Tibial artery (tissue), 4 donors: ENCODE measurements at regions of chr4 and their contacts with region 1.

Region 1: DNA sequence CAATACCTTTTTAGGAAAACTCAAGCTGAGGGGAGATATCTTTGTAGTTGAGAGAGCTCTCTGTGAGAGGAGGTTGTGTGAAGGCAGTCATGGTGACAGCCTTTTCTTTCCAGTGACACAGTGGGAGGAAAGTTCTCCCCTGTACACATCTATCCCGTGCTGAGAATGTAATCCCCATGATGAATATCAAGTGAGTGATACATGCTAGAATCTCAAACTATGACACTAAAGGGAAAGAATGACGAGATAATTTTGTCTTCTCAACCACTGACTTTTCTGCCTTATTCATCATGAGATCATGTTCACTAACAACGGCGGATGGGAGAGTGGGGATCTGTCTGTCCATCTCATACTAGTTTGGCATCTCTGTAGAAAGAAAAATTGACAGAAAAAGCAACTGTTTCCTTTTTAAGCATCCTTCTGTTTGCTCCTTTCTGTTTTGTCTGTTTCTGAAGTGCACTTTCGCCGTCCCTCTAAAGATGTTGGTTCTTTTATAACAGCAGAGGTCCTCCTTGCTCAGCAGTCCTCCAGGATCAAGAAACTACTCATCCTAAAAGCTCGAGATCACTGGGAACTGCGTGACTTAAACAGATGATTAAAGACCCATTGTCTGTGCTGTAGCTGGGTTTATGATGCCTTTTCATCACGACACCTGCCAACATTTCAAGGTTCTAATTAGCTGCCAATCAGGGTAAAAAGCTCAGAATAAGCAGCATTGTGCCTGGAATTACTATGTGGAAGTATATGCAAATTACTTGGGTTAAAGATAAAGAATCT is 137.6 kb downstream of the DCK start:
- DNase-seq: no peak
- H3K4me3 ChIP-seq: no peak overlapping the region
- H3K27ac ChIP-seq: no peak overlapping the region
- H3K4me1 ChIP-seq: no peaks in the 10 kb centered on the region
- H3K27me3 ChIP-seq: no peaks in the 10 kb centered on the region
- CTCF ChIP-seq: peak; percentile 33 to 40

Region 2: DNA sequence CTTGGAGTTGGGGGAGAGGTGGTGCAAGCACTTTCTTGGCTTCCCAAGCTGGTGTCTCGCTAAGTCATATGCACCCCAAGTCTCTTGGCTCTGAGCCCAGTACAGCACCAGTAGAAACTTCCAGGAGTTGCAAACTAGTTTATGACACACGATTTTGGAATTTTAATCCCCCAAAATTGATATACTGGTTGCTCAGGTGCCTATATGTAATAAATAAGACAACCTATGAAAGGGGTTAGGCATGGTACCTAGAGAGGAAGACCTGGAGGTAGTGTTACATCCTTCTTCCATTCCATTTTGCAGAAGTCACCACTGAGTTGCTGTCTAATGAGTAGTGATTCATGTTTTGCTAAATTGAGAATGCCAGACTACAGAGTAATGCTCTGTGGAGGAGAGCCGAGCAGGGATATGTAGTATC is 203.5 kb after region 1 on chr4:
- intact Hi-C with region 1: no loop called
- DNase-seq: no peak
- H3K4me3 ChIP-seq: no peak overlapping the region
- H3K27ac ChIP-seq: no peak overlapping the region
- H3K4me1 ChIP-seq: no peaks in the 10 kb centered on the region
- H3K27me3 ChIP-seq: no peaks in the 10 kb centered on the region
- CTCF ChIP-seq: no peak

Region 3: DNA sequence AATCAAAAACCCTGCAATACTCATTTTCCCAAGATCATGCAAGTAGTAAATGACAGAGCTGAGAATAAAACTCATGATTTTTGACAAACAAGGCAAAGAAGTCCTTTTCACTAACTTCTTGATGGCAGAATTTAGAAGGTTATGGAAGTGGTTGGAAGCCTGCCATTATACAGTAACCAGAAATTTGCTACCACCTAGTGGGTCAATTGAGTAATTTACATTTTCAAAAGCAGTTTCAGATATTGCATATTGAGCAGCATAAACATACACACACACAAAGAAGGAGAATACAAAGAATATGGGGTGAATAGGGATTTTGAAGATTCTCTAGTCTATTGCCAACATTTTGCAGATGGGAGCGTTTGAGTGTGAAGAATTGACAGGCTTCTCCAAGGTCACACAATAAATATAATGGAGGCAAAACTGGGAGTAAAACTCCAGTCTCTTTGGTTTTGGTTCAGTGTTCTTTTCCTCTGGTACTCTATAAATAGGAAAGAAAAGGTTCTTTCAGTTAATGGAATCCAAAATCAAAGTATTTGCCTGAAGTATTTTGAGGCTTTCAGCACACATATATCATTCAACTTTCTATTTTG is 582.7 kb after region 1 on chr4:
- intact Hi-C with region 1: loop called (anchors 10 kb)
- DNase-seq: no peak
- H3K4me3 ChIP-seq: no peak overlapping the region
- H3K27ac ChIP-seq: no peak overlapping the region
- H3K4me1 ChIP-seq: no peaks in the 10 kb centered on the region
- H3K27me3 ChIP-seq: no peaks in the 10 kb centered on the region
- CTCF ChIP-seq: peak; percentile 53 to 70